ENCODE measurements at regions of chr2 and their contacts with region 1.

Region 1: DNA sequence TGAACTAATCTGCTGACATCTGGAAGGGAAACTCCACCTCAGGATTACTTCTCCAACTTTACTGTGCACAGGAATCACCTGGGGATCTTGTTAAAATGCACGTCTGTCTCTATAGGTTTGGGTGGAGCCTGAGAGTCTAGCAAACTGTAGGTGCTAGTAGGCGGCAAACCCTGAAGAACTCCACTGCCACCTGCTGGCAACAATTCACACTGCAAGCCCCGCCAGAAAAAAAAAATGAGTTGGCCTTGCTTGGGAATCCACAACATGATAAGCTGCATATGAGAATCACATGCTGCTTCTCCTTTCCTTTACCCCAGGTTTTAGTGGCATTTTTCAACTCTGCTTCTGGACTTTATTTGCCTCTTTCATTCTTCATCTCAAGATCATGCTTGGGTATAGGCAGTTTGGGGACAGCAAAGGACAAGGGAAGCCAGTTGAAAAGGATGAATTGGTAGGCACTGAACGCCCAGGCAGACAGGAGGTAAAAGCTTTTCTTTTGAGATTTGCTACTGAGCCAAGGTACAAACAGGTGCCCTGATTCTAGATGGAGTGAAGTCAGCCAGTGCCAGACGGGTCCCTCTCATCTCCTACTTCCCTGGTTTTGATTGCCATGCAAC is 88.8 kb downstream of the VIT start:
- DNase-seq: peak; percentile 80
- H3K4me3 Mint-ChIP-seq: no peak overlapping the region
- H3K27ac Mint-ChIP-seq: no peak overlapping the region
- H3K4me1 Mint-ChIP-seq: no peaks in the 10 kb centered on the region
- H3K27me3 Mint-ChIP-seq: no peaks in the 10 kb centered on the region

Region 2: GRCh38 chr2:35973132-35973736 is 812.1 kb before region 1 on chr2:
- CTCF ChIA-PET with region 1: no interaction called
- intact Hi-C with region 1: loop called (anchors 10 kb)
- DNase-seq: peak; percentile 33
- H3K4me3 Mint-ChIP-seq: no peak overlapping the region
- H3K27ac Mint-ChIP-seq: no peak overlapping the region
- H3K4me1 Mint-ChIP-seq: peaks cover 2% of the 10 kb centered on the region
- H3K27me3 Mint-ChIP-seq: peaks cover 4% of the 10 kb centered on the region

Region 3: DNA sequence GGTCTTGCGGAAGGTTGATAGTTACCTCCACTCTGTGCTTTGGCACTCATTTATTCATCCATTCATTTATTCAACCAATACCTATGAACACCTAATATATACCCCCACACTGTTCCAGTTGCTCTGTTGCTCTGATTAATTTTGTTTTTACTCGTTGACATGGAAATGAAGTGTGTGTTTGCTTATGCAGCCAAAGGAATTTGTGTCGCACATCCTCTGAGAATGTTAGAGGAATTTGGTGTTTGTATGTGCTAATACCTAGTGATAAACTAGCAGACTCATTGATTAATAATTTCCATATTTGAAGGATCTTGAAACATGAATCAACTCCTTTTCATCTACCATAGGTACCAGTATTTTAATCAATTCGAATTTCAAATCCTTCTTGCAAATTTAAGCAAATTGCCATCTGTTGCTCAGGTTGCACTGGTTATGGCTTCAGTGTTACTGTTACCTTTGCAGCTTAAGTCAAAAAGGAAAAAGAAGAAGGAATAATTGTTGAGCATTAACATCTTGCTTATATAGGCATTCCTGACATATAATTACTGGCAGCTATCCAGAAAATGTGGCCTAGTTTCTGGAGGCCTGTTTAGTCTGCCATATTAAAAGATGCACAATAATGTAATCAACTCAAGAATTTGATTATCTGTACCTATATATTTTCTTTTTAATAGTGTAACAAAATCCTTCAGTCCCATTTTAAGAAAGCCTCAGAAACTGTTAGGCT is 455.4 kb before region 1 on chr2:
- CTCF ChIA-PET with region 1: no interaction called
- intact Hi-C with region 1: no loop called
- DNase-seq: no peak
- H3K4me3 Mint-ChIP-seq: no peak overlapping the region
- H3K27ac Mint-ChIP-seq: no peak overlapping the region
- H3K4me1 Mint-ChIP-seq: peaks cover 2% of the 10 kb centered on the region
- H3K27me3 Mint-ChIP-seq: no peaks in the 10 kb centered on the region

Region 4: GRCh38 chr2:36800381-36800780 is 15.1 kb after region 1 on chr2:
- CTCF ChIA-PET with region 1: interaction called, 17 read pairs
- intact Hi-C with region 1: no loop called
- DNase-seq: peak; percentile 42
- H3K4me3 Mint-ChIP-seq: no peak overlapping the region
- H3K27ac Mint-ChIP-seq: peak overlapping the region; percentile 16
- H3K4me1 Mint-ChIP-seq: peaks cover 8% of the 10 kb centered on the region
- H3K27me3 Mint-ChIP-seq: peaks cover 13% of the 10 kb centered on the region

Region 5: GRCh38 chr2:37005118-37005868 is 220.0 kb after region 1 on chr2:
- CTCF ChIA-PET with region 1: interaction called, 18 read pairs
- intact Hi-C with region 1: loop called (anchors 1 kb)
- DNase-seq: peak; percentile 54
- H3K4me3 Mint-ChIP-seq: peak overlapping the region; percentile 23
- H3K27ac Mint-ChIP-seq: peak overlapping the region; percentile 26
- H3K4me1 Mint-ChIP-seq: peaks cover 10% of the 10 kb centered on the region
- H3K27me3 Mint-ChIP-seq: no peaks in the 10 kb centered on the region

Region 6: DNA sequence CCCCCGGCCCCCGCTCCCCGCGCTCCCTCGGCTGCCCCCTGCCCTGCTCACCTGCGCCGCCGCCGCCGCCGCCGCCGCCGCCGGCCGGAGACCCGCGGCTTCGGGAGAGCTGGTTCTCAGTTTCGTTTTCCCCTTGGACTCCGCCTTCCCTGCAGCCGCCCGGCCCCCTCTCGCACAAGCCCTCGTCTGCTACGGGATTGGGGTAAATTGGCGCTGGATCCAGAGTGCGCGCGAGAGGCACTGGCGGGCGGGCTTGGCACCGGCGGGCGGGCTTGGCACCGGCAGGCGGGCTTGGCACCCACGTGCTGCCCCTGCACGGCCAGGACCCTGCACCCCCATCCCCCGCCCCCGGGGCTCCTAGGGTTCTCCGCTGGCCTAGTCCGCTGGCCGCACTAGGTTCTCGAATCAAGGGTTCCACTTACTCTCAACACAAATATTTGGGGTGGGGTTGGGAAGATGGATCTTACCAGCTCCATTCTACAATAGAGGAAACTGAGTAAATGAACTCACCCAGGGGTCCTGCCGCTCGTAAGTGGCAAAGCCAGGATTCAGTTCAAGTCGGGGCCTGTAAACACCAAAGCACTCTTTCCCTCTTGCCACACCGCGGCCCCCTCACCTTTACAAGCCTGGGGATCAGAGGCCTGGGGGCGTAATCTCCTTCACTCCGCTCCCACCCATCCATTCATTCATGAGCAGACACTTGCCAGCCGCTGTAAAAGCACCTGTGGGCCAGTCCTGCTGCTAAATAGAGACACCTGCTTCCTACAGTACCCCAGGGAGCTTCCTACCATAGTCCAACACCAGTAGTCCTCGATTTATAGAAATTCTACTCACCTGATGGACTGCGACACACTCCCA is 371.8 kb after region 1 on chr2 and contains the start of gene EIF2AK2:
- CTCF ChIA-PET with region 1: interaction called, 5 read pairs
- intact Hi-C with region 1: loop called (anchors 10 kb)
- DNase-seq: peak; percentile 80
- H3K4me3 Mint-ChIP-seq: peak within 1 kb of the TSS; percentile 86
- H3K27ac Mint-ChIP-seq: peak within 1 kb of the TSS; percentile 85
- H3K4me1 Mint-ChIP-seq: peaks cover 30% of the 10 kb centered on the region
- H3K27me3 Mint-ChIP-seq: no peaks in the 10 kb centered on the region
- total RNA-seq, gene EIF2AK2: 54.5 to 55.7 TPM

Measured in activated naive CD4-positive, alpha-beta T cell treated with anti-CD3 and anti-CD28 coated beads for 36 hours (primary cell).